Transverse colon (tissue), 4 donors: ENCODE measurements at regions of chr18 and their contacts with region 1.

Region 1: DNA sequence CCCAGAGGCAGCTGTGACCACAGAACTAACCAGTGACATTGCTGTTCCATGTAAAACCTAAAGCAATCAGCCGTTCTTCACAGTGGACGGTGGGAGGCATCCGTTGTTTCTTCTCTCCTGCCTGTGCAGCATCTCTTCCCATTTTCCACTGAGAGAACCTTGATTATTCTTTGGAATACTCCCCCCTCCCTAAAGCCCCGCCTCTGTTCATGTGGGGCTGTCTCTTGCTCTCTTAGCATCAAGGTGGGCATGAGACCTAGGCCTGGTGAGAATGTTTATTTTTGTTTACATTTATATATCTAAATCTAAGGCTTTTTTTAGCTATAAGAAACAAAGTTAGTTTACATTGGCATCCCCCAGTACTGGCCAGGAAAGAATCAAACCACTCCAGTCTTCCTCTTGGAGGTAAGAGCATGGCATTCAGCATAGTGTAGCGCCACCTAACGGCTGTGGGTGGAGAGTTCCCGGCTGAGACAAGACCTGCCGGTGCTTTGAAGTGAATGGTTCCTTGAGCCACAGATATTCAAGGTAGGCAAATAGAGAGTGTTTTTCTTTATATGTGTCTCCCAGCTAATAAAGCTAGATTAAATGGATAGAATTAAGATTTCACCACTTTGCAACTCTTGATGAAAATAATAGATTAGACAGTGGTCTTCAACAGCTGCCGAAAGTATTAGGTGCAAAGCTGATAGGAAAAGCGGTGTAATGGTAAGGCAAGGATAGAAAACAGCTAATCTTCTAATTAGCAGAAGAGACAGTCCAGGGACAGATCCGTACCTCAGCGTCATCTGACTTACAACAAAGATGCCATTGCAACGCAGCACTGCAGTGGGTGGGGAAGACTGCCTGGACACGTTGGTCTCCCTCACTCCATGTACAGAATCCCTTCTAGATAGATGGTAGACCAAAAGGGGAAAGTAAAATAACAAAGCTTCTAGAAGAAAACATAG is 219.6 kb upstream of the RAB12 start:
- DNase-seq: peak; percentile 69
- H3K4me3 ChIP-seq: no peak overlapping the region
- H3K27ac ChIP-seq: no peak overlapping the region
- H3K4me1 ChIP-seq: no peaks in the 10 kb centered on the region
- H3K27me3 ChIP-seq: no peaks in the 10 kb centered on the region
- CTCF ChIP-seq: peak; percentile 54 to 80 (median 66)
- EP300 ChIP-seq: no peak
- POLR2A ChIP-seq: no peak

Region 2: GRCh38 chr18:7272311-7273049 is 1117.2 kb before region 1 on chr18:
- in situ Hi-C with region 1: loop called in 1 of 4 experiments (anchors 25 kb)
- intact Hi-C with region 1: loop called (anchors 10 kb)
- DNase-seq: peak; percentile 37
- H3K4me3 ChIP-seq: no peak overlapping the region
- H3K27ac ChIP-seq: peak overlapping the region; percentile 57 to 83 (median 66)
- H3K4me1 ChIP-seq: peaks cover 0 to 9% (median 0%) of the 10 kb centered on the region in 4 donors
- H3K27me3 ChIP-seq: no peaks in the 10 kb centered on the region
- CTCF ChIP-seq: peak in 3 of 5 experiments; percentile 24 to 49 (median 33)
- EP300 ChIP-seq: no peak
- POLR2A ChIP-seq: no peak

Region 3: GRCh38 chr18:7789856-7790552 is 599.7 kb before region 1 on chr18:
- in situ Hi-C with region 1: loop called in 1 of 4 experiments (anchors 25 kb)
- intact Hi-C with region 1: no loop called
- DNase-seq: no peak
- H3K4me3 ChIP-seq: no peak overlapping the region
- H3K27ac ChIP-seq: peak overlapping the region in 1 of 4 donors; percentile 0
- H3K4me1 ChIP-seq: no peaks in the 10 kb centered on the region
- H3K27me3 ChIP-seq: no peaks in the 10 kb centered on the region
- CTCF ChIP-seq: peak; percentile 21 to 39 (median 28)
- EP300 ChIP-seq: no peak
- POLR2A ChIP-seq: no peak

Region 4: DNA sequence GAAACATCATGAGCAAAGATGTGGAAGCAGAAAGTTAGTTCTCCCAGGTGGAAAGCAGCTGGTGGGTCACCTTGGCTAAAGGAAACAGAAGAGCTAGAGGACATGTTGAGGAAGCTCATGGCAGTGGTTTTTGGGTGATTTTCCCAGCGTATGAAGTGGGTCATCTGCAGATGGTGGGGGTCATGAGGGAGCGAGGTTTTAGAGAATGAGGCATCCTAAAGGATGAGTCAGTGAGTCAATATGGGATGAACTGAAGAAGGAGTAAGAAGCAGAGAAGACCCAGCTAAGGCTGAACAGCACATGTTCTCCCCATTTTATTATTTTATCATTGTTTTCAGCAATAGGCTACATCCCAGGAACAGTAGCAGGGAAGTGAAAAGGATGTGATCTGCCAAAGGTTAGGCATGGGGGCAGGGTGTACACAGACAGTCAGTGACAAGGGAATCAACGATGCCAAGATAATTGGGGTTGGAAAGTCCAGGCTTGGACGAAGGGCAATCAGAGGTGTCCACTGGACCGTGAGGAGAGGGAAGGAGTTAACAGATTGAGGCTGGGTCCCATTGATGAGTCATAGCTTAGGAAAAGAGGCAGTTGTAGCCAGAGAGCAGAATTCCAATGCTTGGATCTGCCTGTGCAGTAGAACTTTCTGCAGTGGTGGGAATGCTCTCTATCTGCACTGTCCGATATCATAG is 69.7 kb before region 1 on chr18:
- in situ Hi-C with region 1: no loop called
- intact Hi-C with region 1: no loop called
- DNase-seq: no peak
- H3K4me3 ChIP-seq: no peak overlapping the region
- H3K27ac ChIP-seq: no peak overlapping the region
- H3K4me1 ChIP-seq: no peaks in the 10 kb centered on the region
- H3K27me3 ChIP-seq: no peaks in the 10 kb centered on the region
- CTCF ChIP-seq: no peak
- EP300 ChIP-seq: no peak
- POLR2A ChIP-seq: no peak